Activated CD4-positive, alpha-beta T cell treated with anti-CD3 and anti-CD28 coated beads for 36 hours (primary cell): ENCODE measurements at regions of chr12 and their contacts with region 1.

Region 1: DNA sequence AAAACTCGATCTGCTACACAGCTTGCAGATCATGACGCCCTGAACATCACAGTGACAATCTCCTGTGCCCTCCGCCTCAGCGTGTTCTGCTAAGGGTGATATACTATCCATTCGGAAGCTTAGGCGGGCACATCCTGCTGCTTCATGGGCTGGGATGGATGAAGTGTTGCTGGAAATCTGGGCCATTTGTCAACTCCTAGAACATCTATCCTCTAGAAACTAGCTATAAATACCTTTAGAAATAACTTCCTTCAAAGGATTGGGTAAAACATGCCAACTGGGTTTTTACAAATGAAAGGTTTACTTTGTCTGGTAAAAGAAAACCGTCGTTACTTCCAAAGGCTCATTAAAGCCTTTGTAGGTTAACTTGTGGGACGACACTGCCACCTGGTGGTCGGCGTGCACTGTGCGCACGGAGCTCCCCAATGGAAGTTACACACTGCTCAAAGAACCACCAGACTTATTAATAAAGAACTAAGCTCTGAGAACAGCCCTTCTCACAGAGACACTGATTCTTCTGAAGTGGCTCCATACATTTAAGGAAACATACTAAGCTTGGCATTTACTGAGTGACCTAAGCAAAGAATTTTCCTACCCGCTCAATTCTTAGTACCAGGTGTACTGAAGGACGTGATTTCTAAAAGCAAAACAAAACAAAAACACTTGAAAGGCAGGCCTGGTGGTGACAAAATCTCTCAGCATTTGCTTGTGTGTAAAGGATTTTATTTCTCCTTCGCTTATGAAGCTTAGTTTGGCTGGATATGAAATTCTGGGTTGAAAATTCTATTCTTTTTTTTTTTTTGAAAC is 21.6 kb upstream of the CACNA2D4 start:
- DNase-seq: peak; percentile 94
- ATAC-seq: peak; percentile 97
- H3K4me3 Mint-ChIP-seq: no peak overlapping the region
- H3K27ac Mint-ChIP-seq: no peak overlapping the region
- H3K4me1 Mint-ChIP-seq: peaks cover 4% of the 10 kb centered on the region
- H3K27me3 Mint-ChIP-seq: no peaks in the 10 kb centered on the region

Region 2: GRCh38 chr12:750366-751191 is 1189.4 kb before region 1 on chr12:
- CTCF ChIA-PET with region 1: no interaction called
- POLR2A ChIA-PET with region 1: no interaction called
- intact Hi-C with region 1: no loop called
- DNase-seq: no peak
- ATAC-seq: no peak
- H3K4me3 Mint-ChIP-seq: no peak overlapping the region
- H3K27ac Mint-ChIP-seq: no peak overlapping the region
- H3K4me1 Mint-ChIP-seq: peaks cover 12% of the 10 kb centered on the region
- H3K27me3 Mint-ChIP-seq: no peaks in the 10 kb centered on the region

Region 3: GRCh38 chr12:902581-902980 is 1037.4 kb before region 1 on chr12:
- CTCF ChIA-PET with region 1: no interaction called
- POLR2A ChIA-PET with region 1: no interaction called
- intact Hi-C with region 1: no loop called
- DNase-seq: no peak
- ATAC-seq: no peak
- H3K4me3 Mint-ChIP-seq: no peak overlapping the region
- H3K27ac Mint-ChIP-seq: peak overlapping the region; percentile 33
- H3K4me1 Mint-ChIP-seq: peaks cover 39% of the 10 kb centered on the region
- H3K27me3 Mint-ChIP-seq: no peaks in the 10 kb centered on the region

Region 4: GRCh38 chr12:1634590-1635191 is 305.3 kb before region 1 on chr12:
- CTCF ChIA-PET with region 1: interaction called, 32 read pairs
- POLR2A ChIA-PET with region 1: no interaction called
- intact Hi-C with region 1: loop called (anchors 1 to 5 kb)
- DNase-seq: peak; percentile 82
- ATAC-seq: peak; percentile 73
- H3K4me3 Mint-ChIP-seq: no peak overlapping the region
- H3K27ac Mint-ChIP-seq: no peak overlapping the region
- H3K4me1 Mint-ChIP-seq: peaks cover 13% of the 10 kb centered on the region
- H3K27me3 Mint-ChIP-seq: peaks cover 51% of the 10 kb centered on the region

Region 5: GRCh38 chr12:1661553-1662335 is 278.3 kb before region 1 on chr12:
- CTCF ChIA-PET with region 1: interaction called, 11 read pairs
- POLR2A ChIA-PET with region 1: no interaction called
- intact Hi-C with region 1: loop called in 1 of 2 experiments (anchors 2 kb)
- DNase-seq: peak; percentile 93
- ATAC-seq: peak; percentile 94
- H3K4me3 Mint-ChIP-seq: peak overlapping the region; percentile 73
- H3K27ac Mint-ChIP-seq: peak overlapping the region; percentile 76
- H3K4me1 Mint-ChIP-seq: peaks cover 36% of the 10 kb centered on the region
- H3K27me3 Mint-ChIP-seq: no peaks in the 10 kb centered on the region

Region 6: GRCh38 chr12:1830981-1831963 is 108.7 kb before region 1 on chr12:
- CTCF ChIA-PET with region 1: interaction called, 12 read pairs
- POLR2A ChIA-PET with region 1: no interaction called
- intact Hi-C with region 1: no loop called
- DNase-seq: peak; percentile 52
- ATAC-seq: peak; percentile 49
- H3K4me3 Mint-ChIP-seq: no peak overlapping the region
- H3K27ac Mint-ChIP-seq: no peak overlapping the region
- H3K4me1 Mint-ChIP-seq: no peaks in the 10 kb centered on the region
- H3K27me3 Mint-ChIP-seq: peaks cover 20% of the 10 kb centered on the region

Region 7: DNA sequence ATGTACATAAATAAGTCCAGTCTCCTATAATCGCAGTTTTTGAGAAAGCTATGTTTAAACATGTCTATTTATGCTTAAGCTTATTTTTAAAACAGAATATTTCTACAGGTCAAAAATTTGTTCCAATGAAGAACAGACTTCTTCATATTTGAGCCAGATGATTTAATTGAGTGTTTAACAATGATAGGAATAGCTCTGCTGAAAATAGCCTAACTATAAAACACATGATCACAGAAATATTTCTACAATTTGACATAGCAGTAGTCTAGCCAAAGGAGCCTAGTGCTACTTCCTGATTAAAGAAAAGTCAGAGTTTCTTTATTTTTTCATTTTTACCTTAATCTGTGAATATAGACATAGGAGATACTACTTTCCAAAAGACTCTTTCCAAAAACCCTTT is 34.8 kb after region 1 on chr12:
- CTCF ChIA-PET with region 1: interaction called, 11 read pairs
- POLR2A ChIA-PET with region 1: no interaction called
- intact Hi-C with region 1: no loop called
- DNase-seq: no peak
- ATAC-seq: no peak
- H3K4me3 Mint-ChIP-seq: no peak overlapping the region
- H3K27ac Mint-ChIP-seq: no peak overlapping the region
- H3K4me1 Mint-ChIP-seq: peaks cover 2% of the 10 kb centered on the region
- H3K27me3 Mint-ChIP-seq: no peaks in the 10 kb centered on the region